Activated CD4-positive, alpha-beta memory T cell treated with anti-CD3 and anti-CD28 coated beads, Interleukin-2, amount 10 ng/mL, durations not matched to agents 7 days and 5 days (primary cell): ENCODE measurements at regions of chr10 and their contacts with region 1.

Region 1: GRCh38 chr10:104121520-104122224 is at the start of gene SFR1:
- DNase-seq: peak; percentile 99
- H3K4me3 Mint-ChIP-seq: peak within 1 kb of the TSS; percentile 80
- H3K27ac Mint-ChIP-seq: peak within 1 kb of the TSS; percentile 98
- H3K4me1 Mint-ChIP-seq: peaks cover 36% of the 10 kb centered on the region
- H3K27me3 Mint-ChIP-seq: peaks cover 7% of the 10 kb centered on the region
- total RNA-seq, gene SFR1: 17.8 to 18.7 TPM

Region 2: GRCh38 chr10:103888113-103888841 is 233.4 kb before region 1 on chr10:
- CTCF ChIA-PET with region 1: interaction called, 56 read pairs
- POLR2A ChIA-PET with region 1: interaction called, 32 read pairs
- DNase-seq: no peak
- H3K4me3 Mint-ChIP-seq: no peak overlapping the region
- H3K27ac Mint-ChIP-seq: peak overlapping the region; percentile 54
- H3K4me1 Mint-ChIP-seq: peaks cover 47% of the 10 kb centered on the region
- H3K27me3 Mint-ChIP-seq: no peaks in the 10 kb centered on the region

Region 3: GRCh38 chr10:103911021-103911459 is 210.6 kb before region 1 on chr10:
- CTCF ChIA-PET with region 1: interaction called, 12 read pairs
- POLR2A ChIA-PET with region 1: interaction called, 52 read pairs
- DNase-seq: peak; percentile 69
- H3K4me3 Mint-ChIP-seq: peak overlapping the region; percentile 65
- H3K27ac Mint-ChIP-seq: peak overlapping the region; percentile 98
- H3K4me1 Mint-ChIP-seq: peaks cover 76% of the 10 kb centered on the region
- H3K27me3 Mint-ChIP-seq: no peaks in the 10 kb centered on the region

Region 4: GRCh38 chr10:103990121-103990520 is 131.6 kb before region 1 on chr10:
- CTCF ChIA-PET with region 1: no interaction called
- POLR2A ChIA-PET with region 1: no interaction called
- DNase-seq: no peak
- H3K4me3 Mint-ChIP-seq: no peak overlapping the region
- H3K27ac Mint-ChIP-seq: no peak overlapping the region
- H3K4me1 Mint-ChIP-seq: peaks cover 26% of the 10 kb centered on the region
- H3K27me3 Mint-ChIP-seq: no peaks in the 10 kb centered on the region

Region 5: DNA sequence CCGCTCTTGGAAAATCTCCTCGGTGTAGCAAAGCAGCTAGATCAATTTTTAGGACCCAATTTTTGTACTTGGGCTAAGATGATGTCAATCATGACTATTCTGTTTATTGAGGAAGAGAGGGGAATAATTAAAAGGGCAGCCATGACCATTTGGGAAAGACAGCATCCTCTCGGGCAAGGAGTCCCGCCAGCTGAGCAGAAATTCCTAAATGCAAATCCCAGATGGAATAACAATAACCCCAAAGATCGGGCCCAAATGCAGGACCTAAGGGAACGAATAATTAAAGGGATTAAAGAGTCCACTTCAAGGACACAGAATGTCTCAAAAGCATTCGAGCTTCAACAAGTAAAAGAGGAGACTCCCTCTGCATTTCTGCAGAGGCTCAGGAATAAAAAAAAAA is 54.7 kb before region 1 on chr10:
- CTCF ChIA-PET with region 1: no interaction called
- POLR2A ChIA-PET with region 1: no interaction called
- DNase-seq: no peak
- H3K4me3 Mint-ChIP-seq: no peak overlapping the region
- H3K27ac Mint-ChIP-seq: no peak overlapping the region
- H3K4me1 Mint-ChIP-seq: no peaks in the 10 kb centered on the region
- H3K27me3 Mint-ChIP-seq: peaks cover 15% of the 10 kb centered on the region

Region 6: GRCh38 chr10:104099274-104099673 is 22.4 kb before region 1 on chr10:
- CTCF ChIA-PET with region 1: interaction called, 11 read pairs
- POLR2A ChIA-PET with region 1: interaction called, 12 read pairs
- DNase-seq: no peak
- H3K4me3 Mint-ChIP-seq: no peak overlapping the region
- H3K27ac Mint-ChIP-seq: no peak overlapping the region
- H3K4me1 Mint-ChIP-seq: no peaks in the 10 kb centered on the region
- H3K27me3 Mint-ChIP-seq: peaks cover 20% of the 10 kb centered on the region

Region 7: GRCh38 chr10:104139221-104139620 is 17.5 kb after region 1 on chr10:
- CTCF ChIA-PET with region 1: interaction called, 12 read pairs
- POLR2A ChIA-PET with region 1: interaction called, 3 read pairs
- DNase-seq: no peak
- H3K4me3 Mint-ChIP-seq: no peak overlapping the region
- H3K27ac Mint-ChIP-seq: no peak overlapping the region
- H3K4me1 Mint-ChIP-seq: no peaks in the 10 kb centered on the region
- H3K27me3 Mint-ChIP-seq: peaks cover 25% of the 10 kb centered on the region

Region 8: GRCh38 chr10:104337974-104338735 is 216.5 kb after region 1 on chr10 and contains the start of gene ITPRIP:
- CTCF ChIA-PET with region 1: no interaction called
- POLR2A ChIA-PET with region 1: interaction called, 12 read pairs
- DNase-seq: peak; percentile 78
- H3K4me3 Mint-ChIP-seq: peak within 1 kb of the TSS; percentile 95
- H3K27ac Mint-ChIP-seq: peak within 1 kb of the TSS; percentile 99
- H3K4me1 Mint-ChIP-seq: peaks cover 45% of the 10 kb centered on the region
- H3K27me3 Mint-ChIP-seq: peaks cover 8% of the 10 kb centered on the region
- total RNA-seq, gene ITPRIP: 24.6 to 25.9 TPM